ENCODE measurements at regions of chr14 and their contacts with region 1.

Region 1: GRCh38 chr14:100900837-100901390 is 2.6 kb downstream of the RTL1 start:
- DNase-seq: peak; percentile 28
- H3K4me3 ChIP-seq: no peak overlapping the region
- H3K27ac ChIP-seq: no peak overlapping the region
- H3K4me1 ChIP-seq: peaks cover 15% of the 10 kb centered on the region
- H3K27me3 ChIP-seq: no peaks in the 10 kb centered on the region
- CTCF ChIP-seq: peak in 1 of 4 experiments; percentile 41
- POLR2A ChIP-seq: no peak

Region 2: GRCh38 chr14:100815478-100816285 is 85.2 kb before region 1 on chr14:
- intact Hi-C with region 1: loop called (anchors 5 kb)
- DNase-seq: no peak
- H3K4me3 ChIP-seq: no peak overlapping the region
- H3K27ac ChIP-seq: no peak overlapping the region
- H3K4me1 ChIP-seq: no peaks in the 10 kb centered on the region
- H3K27me3 ChIP-seq: no peaks in the 10 kb centered on the region
- CTCF ChIP-seq: no peak
- POLR2A ChIP-seq: no peak

Region 3: DNA sequence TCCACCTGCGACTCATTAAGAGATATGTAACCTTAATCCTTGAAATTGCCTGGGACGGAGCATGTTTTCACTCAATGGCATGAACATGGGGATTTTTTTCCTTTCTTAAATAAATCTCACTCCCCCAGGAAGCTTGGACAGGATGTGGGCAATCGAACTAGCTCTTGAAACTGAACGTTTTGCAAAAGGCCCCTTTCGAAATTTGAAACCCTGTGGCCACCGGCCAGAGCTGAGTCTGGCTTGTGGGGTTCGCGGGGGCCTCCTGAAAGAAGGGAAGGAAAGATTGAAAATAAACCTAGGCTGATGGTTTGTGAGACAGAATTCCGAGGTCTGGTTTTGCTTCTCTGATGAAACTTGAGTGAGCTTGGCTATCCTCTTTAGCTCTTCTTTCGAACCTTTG is 104.0 kb after region 1 on chr14:
- intact Hi-C with region 1: no loop called
- DNase-seq: no peak
- H3K4me3 ChIP-seq: no peak overlapping the region
- H3K27ac ChIP-seq: no peak overlapping the region
- H3K4me1 ChIP-seq: no peaks in the 10 kb centered on the region
- H3K27me3 ChIP-seq: no peaks in the 10 kb centered on the region
- CTCF ChIP-seq: no peak
- POLR2A ChIP-seq: no peak

Region 4: GRCh38 chr14:101120641-101121507 is 220.0 kb after region 1 on chr14:
- intact Hi-C with region 1: no loop called
- DNase-seq: peak; percentile 3
- H3K4me3 ChIP-seq: no peak overlapping the region
- H3K27ac ChIP-seq: no peak overlapping the region
- H3K4me1 ChIP-seq: no peaks in the 10 kb centered on the region
- H3K27me3 ChIP-seq: no peaks in the 10 kb centered on the region
- CTCF ChIP-seq: no peak
- POLR2A ChIP-seq: peak; percentile 21